AG04449 (cell line): ENCODE measurements at regions of chr10 and their contacts with region 1.

Region 1: GRCh38 chr10:130190055-130190736 is 54.0 kb downstream of the GLRX3 start:
- DNase-seq: no peak
- H3K4me3 ChIP-seq: peak overlapping the region; percentile 69
- CTCF ChIP-seq: peak; percentile 97

Region 2: DNA sequence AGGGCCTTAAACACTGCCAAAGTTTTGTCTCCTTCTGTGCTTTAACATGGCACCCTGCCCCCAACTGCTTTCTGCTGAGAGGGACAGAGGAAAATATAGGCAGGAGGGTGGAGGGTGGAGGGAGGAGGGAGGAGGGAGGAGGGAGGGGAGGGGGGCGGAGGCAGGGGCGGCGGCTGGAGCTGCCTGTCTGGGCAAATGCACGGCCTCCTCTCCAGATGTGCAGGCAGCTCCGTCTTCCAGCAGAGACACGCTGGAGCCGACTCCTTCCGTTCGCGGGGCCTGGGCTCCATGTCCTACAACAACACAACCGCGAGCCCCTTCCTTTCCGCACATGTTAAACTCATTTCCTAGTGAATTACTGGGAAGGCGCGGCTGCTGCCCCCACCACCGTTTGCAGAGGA is 240.3 kb before region 1 on chr10:
- CTCF ChIA-PET with region 1: no interaction called
- POLR2A ChIA-PET with region 1: no interaction called
- DNase-seq: no peak
- H3K4me3 ChIP-seq: no peak overlapping the region
- CTCF ChIP-seq: no peak

Region 3: DNA sequence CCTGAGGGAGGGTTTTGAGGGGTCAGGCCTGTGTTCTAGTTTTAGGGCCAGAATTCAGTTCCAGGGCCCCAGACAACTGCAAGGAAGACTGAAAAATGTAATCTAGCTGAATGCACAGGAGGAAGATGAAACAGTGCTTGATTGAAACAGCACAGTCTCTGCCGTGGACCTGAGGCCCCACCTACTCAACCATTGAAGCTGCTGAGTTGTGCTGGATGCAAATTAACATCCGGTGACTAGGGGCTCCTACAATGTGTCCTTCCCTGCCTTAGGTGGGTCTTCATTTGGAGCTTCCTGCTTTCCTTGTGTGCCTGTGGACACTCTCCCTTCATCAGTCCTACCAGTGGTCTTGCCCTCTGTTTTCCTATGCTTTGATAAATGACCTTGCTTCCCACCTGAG is 48.3 kb before region 1 on chr10:
- CTCF ChIA-PET with region 1: interaction called, 10 read pairs
- POLR2A ChIA-PET with region 1: no interaction called
- DNase-seq: no peak
- H3K4me3 ChIP-seq: no peak overlapping the region
- CTCF ChIP-seq: no peak

Region 4: GRCh38 chr10:130171196-130171595 is 19.0 kb before region 1 on chr10:
- CTCF ChIA-PET with region 1: interaction called, 70 read pairs
- POLR2A ChIA-PET with region 1: no interaction called
- DNase-seq: no peak
- H3K4me3 ChIP-seq: no peak overlapping the region
- CTCF ChIP-seq: no peak

Region 5: DNA sequence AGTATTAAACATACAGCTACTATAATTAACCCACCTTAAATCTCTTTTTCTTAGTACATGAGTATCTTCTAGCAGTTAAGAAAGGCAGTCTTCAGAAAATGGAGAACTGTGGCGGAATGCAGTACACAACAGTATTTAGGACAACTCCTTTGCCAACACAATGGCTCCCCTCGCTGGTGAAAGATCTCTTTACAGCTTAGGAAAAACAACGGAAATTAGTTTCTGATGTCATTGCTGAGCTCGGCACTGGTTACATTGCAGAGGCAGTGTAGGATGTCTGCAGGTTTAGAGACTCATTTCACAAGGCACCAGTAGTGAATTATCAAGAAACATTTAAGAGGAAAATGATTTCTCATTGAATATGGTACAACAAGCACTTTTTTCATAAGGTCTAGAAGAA is 10.6 kb before region 1 on chr10:
- CTCF ChIA-PET with region 1: interaction called, 70 read pairs
- POLR2A ChIA-PET with region 1: no interaction called
- DNase-seq: peak; percentile 34
- H3K4me3 ChIP-seq: no peak overlapping the region
- CTCF ChIP-seq: peak; percentile 53

Region 6: GRCh38 chr10:131874991-131875451 is 1684.8 kb after region 1 on chr10:
- CTCF ChIA-PET with region 1: interaction called, 51 read pairs
- POLR2A ChIA-PET with region 1: no interaction called
- DNase-seq: peak; percentile 31
- H3K4me3 ChIP-seq: no peak overlapping the region
- CTCF ChIP-seq: peak; percentile 80